H1 (cell line): ENCODE measurements at regions of chr3 and their contacts with region 1.

Region 1: DNA sequence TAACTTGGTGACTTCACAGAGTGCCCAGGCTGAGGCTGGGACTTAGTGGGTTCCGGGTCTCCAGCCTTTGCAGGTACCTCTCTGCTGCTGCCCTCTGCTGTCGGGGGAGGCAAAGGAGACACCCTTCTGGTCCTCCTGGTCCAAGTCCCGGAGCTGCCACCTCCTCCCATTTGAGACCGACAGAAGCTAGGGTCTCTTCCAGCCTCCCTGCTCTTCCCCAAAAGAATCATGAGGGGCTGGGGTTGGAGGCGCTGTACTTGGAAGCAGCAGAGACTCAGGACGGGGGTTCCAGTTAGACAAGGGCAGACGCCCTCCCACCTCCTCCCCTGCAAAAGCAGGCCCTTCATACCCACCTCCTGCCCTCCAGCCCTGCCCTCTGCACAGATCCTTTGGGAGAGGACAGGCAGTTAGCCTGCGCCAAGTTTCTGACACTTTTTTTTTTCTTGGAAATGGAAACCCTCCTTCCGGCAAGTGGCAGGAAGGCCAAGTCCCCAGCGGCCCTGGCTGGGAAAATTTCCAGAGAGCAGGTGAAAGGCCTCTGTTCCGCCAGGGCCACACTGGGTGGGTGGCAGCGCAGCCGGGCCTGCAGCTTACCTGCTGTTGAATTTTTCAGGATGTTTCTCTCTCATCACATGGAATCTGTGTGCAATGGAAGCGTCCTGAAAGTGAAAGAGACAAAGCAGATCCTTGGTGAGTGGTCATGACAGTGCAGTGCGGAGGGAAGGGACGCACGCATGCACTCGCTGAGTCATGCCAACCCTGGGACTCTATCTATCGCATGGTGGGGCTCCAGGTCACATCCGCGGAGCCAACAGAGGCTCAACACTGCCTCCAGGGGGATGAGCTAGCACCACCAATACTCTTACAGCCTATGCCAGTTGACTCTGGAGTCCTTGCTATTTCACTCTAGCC is 119.9 kb downstream of the DGKG start:
- DNase-seq: peak; percentile 64 to 80
- H3K4me3 ChIP-seq: peak overlapping the region in 3 of 4 experiments; percentile 7 to 13 (median 12); a peak in 3 of 8 replicates
- H3K27ac ChIP-seq: no peak overlapping the region
- H3K4me1 ChIP-seq: peaks cover 0 to 6% (median 2%) of the 10 kb centered on the region in 4 experiments; a peak in 3 of 7 replicates
- H3K27me3 ChIP-seq: no peaks in the 10 kb centered on the region
- CTCF ChIP-seq: peak; percentile 75 to 91 (median 87)
- EP300 ChIP-seq: no peak
- POLR2A ChIP-seq: no peak
- RAD21 ChIP-seq: peak; percentile 87 to 89

Region 2: GRCh38 chr3:185976977-185977678 is 265.0 kb before region 1 on chr3:
- CTCF ChIA-PET with region 1: interaction called, 24 read pairs
- POLR2A ChIA-PET with region 1: no interaction called
- DNase-seq: peak; percentile 41 to 93
- H3K4me3 ChIP-seq: no peak overlapping the region
- H3K27ac ChIP-seq: no peak overlapping the region
- H3K4me1 ChIP-seq: no peaks in the 10 kb centered on the region
- H3K27me3 ChIP-seq: no peaks in the 10 kb centered on the region
- CTCF ChIP-seq: peak; percentile 90 to 99 (median 97)
- EP300 ChIP-seq: no peak
- POLR2A ChIP-seq: no peak
- RAD21 ChIP-seq: peak; percentile 79 to 82

Region 3: GRCh38 chr3:185983495-185984141 is 258.5 kb before region 1 on chr3:
- CTCF ChIA-PET with region 1: interaction called, 57 read pairs
- POLR2A ChIA-PET with region 1: no interaction called
- DNase-seq: peak; percentile 49 to 90
- H3K4me3 ChIP-seq: peak overlapping the region in 3 of 4 experiments; percentile 12 to 44 (median 34); a peak in 5 of 8 replicates
- H3K27ac ChIP-seq: no peak overlapping the region
- H3K4me1 ChIP-seq: peaks cover 0 to 5% (median 2%) of the 10 kb centered on the region in 4 experiments; a peak in 3 of 7 replicates
- H3K27me3 ChIP-seq: peaks cover 0 to 3% (median 0%) of the 10 kb centered on the region in 4 experiments; a peak in 2 of 7 replicates
- CTCF ChIP-seq: peak; percentile 85 to 93 (median 88)
- EP300 ChIP-seq: no peak
- POLR2A ChIP-seq: no peak
- RAD21 ChIP-seq: peak; percentile 98 to 99

Region 4: GRCh38 chr3:186002884-186003472 is 239.2 kb before region 1 on chr3:
- CTCF ChIA-PET with region 1: interaction called, 14 read pairs
- POLR2A ChIA-PET with region 1: no interaction called
- DNase-seq: peak; percentile 10 to 53
- H3K4me3 ChIP-seq: no peak overlapping the region
- H3K27ac ChIP-seq: no peak overlapping the region
- H3K4me1 ChIP-seq: no peaks in the 10 kb centered on the region
- H3K27me3 ChIP-seq: peaks cover 0 to 2% (median 0%) of the 10 kb centered on the region in 4 experiments; a peak in 1 of 7 replicates
- CTCF ChIP-seq: peak; percentile 53 to 71 (median 64)
- EP300 ChIP-seq: no peak
- POLR2A ChIP-seq: no peak
- RAD21 ChIP-seq: peak; percentile 70 to 73

Region 5: GRCh38 chr3:186073641-186074040 is 168.5 kb before region 1 on chr3:
- CTCF ChIA-PET with region 1: interaction called, 10 read pairs
- POLR2A ChIA-PET with region 1: no interaction called
- DNase-seq: no peak
- H3K4me3 ChIP-seq: no peak overlapping the region
- H3K27ac ChIP-seq: no peak overlapping the region
- H3K4me1 ChIP-seq: no peaks in the 10 kb centered on the region
- H3K27me3 ChIP-seq: no peaks in the 10 kb centered on the region
- CTCF ChIP-seq: no peak
- EP300 ChIP-seq: no peak
- POLR2A ChIP-seq: no peak
- RAD21 ChIP-seq: no peak

Region 6: DNA sequence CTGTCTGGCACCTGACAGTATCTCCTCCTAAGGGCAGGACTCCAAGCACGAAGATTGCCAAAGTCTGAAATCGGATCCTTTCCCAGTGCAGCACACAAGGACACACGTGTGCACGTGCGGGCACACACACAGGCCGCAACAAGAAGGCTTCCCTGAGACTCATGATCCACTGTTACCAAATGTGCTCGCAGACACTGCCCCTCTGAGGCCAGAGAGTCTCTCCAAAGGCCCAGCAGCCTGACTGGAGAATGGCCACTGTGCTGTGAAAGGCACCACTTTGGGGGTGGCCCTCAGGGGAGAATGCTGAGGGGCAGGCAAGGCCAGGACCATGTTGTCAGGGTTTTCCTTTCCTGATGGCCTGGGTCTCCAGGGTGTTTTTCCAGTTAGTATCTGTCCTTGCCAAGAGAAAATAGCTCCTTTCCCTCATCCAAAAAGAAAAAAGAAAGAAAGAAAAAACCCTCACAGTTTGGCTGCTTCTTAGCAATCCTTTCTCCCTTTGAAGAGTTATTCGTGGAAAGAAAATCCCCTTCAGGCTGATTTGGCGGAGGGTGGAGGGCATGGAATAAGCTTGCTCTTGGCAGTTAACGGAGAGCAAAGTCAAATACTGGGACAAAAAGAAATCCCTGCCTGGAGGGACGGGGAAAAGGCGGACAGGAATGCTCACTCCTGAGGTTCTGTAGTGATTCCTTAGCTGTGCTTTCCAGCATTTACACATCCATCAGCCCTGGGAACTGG is 21.1 kb before region 1 on chr3:
- CTCF ChIA-PET with region 1: interaction called, 24 read pairs
- POLR2A ChIA-PET with region 1: interaction called, 3 read pairs
- DNase-seq: no peak
- H3K4me3 ChIP-seq: no peak overlapping the region
- H3K27ac ChIP-seq: no peak overlapping the region
- H3K4me1 ChIP-seq: no peaks in the 10 kb centered on the region
- H3K27me3 ChIP-seq: peaks cover 0 to 2% (median 0%) of the 10 kb centered on the region in 4 experiments; a peak in 1 of 7 replicates
- CTCF ChIP-seq: peak; percentile 9 to 32 (median 29); a peak in 3 of 4 replicates
- EP300 ChIP-seq: no peak
- POLR2A ChIP-seq: no peak
- RAD21 ChIP-seq: peak; percentile 50 to 62

Region 7: DNA sequence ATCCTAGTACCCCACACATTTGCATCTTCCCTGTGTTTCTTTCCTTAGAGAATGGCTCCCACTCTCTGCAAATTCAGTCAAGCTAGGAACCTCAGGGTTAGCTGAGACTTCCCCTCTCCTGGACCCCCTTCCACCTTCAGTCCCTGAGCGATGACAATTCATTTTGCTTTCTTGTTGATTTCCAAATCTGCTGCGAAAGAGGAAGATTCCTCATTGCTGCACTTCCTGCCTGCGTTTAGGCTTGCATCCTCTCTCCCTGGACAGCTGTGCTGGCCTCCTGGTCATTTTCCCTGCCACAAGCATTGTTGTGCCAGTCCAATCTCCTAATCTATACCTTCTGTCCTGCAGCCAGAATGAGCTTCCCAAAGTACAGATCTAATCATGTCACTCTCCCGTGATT is 132.2 kb after region 1 on chr3:
- CTCF ChIA-PET with region 1: no interaction called
- POLR2A ChIA-PET with region 1: no interaction called
- DNase-seq: no peak
- H3K4me3 ChIP-seq: no peak overlapping the region
- H3K27ac ChIP-seq: no peak overlapping the region
- H3K4me1 ChIP-seq: no peaks in the 10 kb centered on the region
- H3K27me3 ChIP-seq: no peaks in the 10 kb centered on the region
- CTCF ChIP-seq: no peak
- EP300 ChIP-seq: no peak
- POLR2A ChIP-seq: no peak
- RAD21 ChIP-seq: no peak

Region 8: DNA sequence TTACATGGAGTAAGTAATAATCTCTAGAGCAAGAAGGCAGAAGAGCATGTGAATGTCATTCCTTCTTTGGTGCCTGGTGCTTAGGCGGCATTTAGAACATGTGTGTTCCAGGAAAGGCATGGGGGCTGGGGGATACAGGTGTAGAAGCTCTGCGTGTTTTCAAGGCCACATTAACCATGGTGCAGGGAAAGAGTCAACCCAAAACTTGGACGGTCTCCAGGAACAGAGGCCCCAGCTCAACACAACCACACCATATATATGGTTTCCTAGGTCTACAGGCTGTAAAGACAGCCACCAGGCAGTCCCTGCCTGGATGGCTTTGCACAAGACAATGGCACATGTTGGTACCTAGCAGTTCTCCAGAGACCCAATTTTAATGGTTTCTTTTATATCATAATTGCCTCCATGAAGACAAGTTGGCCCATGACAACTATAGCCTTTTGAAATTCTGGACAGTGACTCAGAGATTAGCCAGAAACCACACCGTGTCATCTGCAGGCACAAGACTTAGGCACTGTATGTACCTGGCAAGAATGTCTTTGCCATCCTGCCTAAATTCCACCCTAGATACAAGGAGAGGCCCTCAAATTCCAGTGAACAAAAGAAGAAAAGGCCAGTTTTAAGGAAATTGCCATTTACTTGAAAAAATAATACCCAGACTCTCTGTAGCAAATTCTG is 144.9 kb after region 1 on chr3:
- CTCF ChIA-PET with region 1: no interaction called
- POLR2A ChIA-PET with region 1: no interaction called
- DNase-seq: no peak
- H3K4me3 ChIP-seq: no peak overlapping the region
- H3K27ac ChIP-seq: no peak overlapping the region
- H3K4me1 ChIP-seq: peaks cover 0 to 4% (median 0%) of the 10 kb centered on the region in 4 experiments; a peak in 2 of 7 replicates
- H3K27me3 ChIP-seq: 0 out of 7 replicates have a peak, but pooled peaks cover 0 to 2% (median 0%) of the 10 kb centered on the region in 4 experiments
- CTCF ChIP-seq: no peak
- EP300 ChIP-seq: no peak
- POLR2A ChIP-seq: no peak
- RAD21 ChIP-seq: no peak